ENCODE measurements at regions of chr3 and their contacts with region 1.

Region 1: DNA sequence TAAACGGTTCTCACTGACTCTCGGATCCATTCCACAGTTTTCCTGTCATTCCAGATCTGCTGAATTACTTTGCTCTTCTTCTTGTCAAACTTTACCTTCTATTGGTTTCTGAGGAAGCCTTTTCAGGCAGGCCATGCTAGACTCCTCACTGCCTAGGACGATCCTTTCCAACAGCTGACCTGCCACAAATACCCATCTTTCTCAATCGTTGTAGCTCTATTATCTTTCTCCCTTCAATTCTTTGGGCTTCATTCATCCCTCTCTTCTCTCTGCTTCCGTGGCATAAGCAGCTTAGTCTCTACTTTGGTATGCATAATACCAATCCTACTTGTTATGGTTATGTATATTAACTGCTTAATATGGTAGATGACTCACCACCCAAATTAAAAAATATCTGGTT is 421.8 kb downstream of the NLGN1 start:
- DNase-seq: no peak
- H3K4me3 ChIP-seq: no peak overlapping the region
- H3K27ac ChIP-seq: no peak overlapping the region
- H3K4me1 ChIP-seq: no peaks in the 10 kb centered on the region
- H3K27me3 ChIP-seq: peaks cover 19% of the 10 kb centered on the region
- CTCF ChIP-seq: no peak

Region 2: GRCh38 chr3:173755153-173755552 is 64.2 kb before region 1 on chr3:
- CTCF ChIA-PET with region 1: no interaction called
- POLR2A ChIA-PET with region 1: no interaction called
- intact Hi-C with region 1: loop called (anchors 5 kb)
- DNase-seq: no peak
- H3K4me3 ChIP-seq: no peak overlapping the region
- H3K27ac ChIP-seq: no peak overlapping the region
- H3K4me1 ChIP-seq: no peaks in the 10 kb centered on the region
- H3K27me3 ChIP-seq: no peaks in the 10 kb centered on the region
- CTCF ChIP-seq: no peak

Measured in A673 (cell line).